H1 (cell line): ENCODE measurements at regions of chr11 and their contacts with region 1.

Region 1: DNA sequence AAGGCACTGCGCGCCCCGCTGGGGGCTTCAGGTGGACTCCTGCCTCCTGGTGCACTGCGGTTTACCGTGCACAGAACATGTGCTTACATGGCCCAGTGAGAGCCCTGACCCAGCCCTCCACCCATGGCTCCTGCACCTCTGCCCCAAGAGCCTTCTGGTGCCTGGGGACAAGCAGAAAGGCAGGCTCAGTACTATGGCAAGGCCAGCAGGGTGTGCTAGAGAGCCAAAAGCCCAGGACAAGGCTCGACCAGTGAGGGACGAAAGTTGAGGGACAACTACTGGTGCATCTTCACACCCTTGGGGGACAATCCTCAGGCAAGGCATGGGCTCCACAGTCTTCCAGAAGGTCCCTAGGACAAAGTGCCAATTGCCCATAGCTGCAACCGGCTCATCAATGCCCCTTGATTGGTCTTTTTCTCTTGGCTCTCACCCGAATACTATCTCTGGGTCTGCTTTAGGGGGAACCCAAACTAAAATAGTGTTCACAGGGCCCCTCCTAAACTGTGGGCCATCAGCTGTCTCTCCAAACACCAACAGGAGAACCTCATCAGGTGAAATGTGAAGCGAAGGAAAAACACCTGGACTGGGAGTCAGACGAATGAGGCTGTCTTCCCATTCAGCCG is 13.5 kb downstream of the PGA5 start:
- DNase-seq: peak; percentile 38 to 89
- H3K4me3 ChIP-seq: no peak overlapping the region
- H3K27ac ChIP-seq: no peak overlapping the region
- H3K4me1 ChIP-seq: no peaks in the 10 kb centered on the region; a peak in 1 of 7 replicates
- H3K27me3 ChIP-seq: no peaks in the 10 kb centered on the region; a peak in 1 of 7 replicates
- CTCF ChIP-seq: peak; percentile 89 to 99 (median 99)
- EP300 ChIP-seq: no peak
- POLR2A ChIP-seq: no peak
- RAD21 ChIP-seq: peak; percentile 66 to 84

Region 2: DNA sequence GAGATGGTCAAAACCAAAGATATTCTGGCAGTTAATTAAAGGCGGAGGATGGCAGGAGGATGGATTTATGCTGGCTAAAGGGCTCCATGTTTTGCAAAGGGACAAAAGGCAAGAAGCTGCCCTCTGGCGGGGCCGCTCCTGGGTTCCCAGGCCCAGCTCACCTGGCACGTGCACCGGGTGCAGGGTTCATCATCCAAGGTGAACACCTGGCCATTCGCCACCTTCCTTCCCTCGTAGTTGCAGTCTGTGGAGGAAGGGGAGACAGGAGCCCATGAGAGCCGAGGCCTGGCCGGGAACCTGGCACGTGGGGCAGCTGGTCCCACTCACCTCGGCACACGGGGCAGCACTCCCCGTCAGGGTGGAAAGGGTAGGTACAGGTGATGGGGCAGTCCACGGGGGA is 10.3 kb after region 1 on chr11:
- CTCF ChIA-PET with region 1: interaction called, 15 read pairs
- POLR2A ChIA-PET with region 1: interaction called, 6 read pairs
- DNase-seq: no peak
- H3K4me3 ChIP-seq: no peak overlapping the region
- H3K27ac ChIP-seq: no peak overlapping the region
- H3K4me1 ChIP-seq: no peaks in the 10 kb centered on the region
- H3K27me3 ChIP-seq: no peaks in the 10 kb centered on the region
- CTCF ChIP-seq: no peak
- EP300 ChIP-seq: no peak
- POLR2A ChIP-seq: no peak
- RAD21 ChIP-seq: no peak

Region 3: DNA sequence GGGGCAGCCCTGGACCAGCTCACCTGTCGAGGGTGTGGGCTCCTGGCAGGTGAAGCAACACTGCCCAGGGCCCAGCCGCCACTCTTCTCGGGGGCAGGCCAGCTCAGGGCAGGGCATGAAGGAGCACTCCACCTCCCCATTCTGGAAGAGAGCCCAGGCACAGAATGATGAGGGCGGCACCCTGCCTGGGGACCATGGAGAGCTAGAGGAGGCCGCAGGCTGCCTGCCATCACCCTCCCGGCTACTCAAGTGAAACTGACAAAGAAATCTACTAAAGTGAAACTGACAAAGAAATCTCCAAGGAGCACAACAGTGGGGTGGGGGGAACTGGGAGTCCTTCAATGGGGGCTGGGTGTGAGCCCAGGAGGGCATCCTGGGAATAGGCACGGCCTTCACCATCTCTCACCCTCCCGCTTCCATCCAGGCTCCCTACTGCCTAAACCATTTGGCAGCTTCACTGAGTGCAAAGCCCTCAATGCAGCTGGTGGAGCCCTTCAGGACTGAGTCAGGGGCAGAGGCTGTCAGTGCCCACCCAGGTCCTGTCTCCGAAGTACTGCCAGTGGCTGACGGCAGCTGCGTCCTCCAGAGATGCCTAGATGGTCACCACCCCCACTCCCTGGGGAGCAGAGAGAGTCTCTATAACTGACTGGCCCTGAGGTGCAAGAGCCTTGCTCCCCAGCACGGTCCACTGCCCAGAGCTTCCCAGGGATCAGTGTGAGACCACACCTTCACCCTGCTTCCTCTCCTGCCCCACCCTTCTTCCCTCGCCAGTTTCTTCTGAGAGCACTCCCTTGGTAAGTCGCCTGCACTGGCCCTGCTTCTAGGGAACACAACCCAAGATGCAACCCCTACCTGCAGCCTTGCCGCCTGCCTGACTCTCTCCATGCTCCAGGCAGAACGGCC is 18.9 kb after region 1 on chr11:
- CTCF ChIA-PET with region 1: interaction called, 32 read pairs
- POLR2A ChIA-PET with region 1: interaction called, 4 read pairs
- DNase-seq: no peak
- H3K4me3 ChIP-seq: no peak overlapping the region
- H3K27ac ChIP-seq: no peak overlapping the region
- H3K4me1 ChIP-seq: no peaks in the 10 kb centered on the region
- H3K27me3 ChIP-seq: no peaks in the 10 kb centered on the region
- CTCF ChIP-seq: no peak
- EP300 ChIP-seq: no peak
- POLR2A ChIP-seq: no peak
- RAD21 ChIP-seq: no peak

Region 4: DNA sequence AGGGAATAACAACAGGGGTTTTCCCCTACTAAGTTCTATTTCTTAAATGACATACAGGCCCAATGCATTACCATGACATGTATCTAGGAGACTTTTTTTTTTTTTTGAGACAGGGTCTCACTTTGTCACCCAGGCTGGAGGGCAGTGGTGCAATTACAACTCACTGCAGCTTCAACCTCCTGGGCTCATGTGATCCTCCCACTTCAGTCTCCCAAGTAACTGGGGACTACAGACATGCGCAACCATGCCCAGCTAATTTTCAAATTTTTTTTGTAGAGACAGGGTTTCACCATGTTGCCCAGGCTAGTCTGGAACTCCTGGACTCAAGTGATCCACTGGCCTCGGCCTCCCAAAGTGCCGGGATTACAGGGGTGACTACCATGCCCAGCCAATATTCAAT is 167.7 kb after region 1 on chr11:
- CTCF ChIA-PET with region 1: no interaction called
- POLR2A ChIA-PET with region 1: no interaction called
- DNase-seq: no peak
- H3K4me3 ChIP-seq: no peak overlapping the region
- H3K27ac ChIP-seq: no peak overlapping the region
- H3K4me1 ChIP-seq: no peaks in the 10 kb centered on the region
- H3K27me3 ChIP-seq: no peaks in the 10 kb centered on the region
- CTCF ChIP-seq: no peak
- EP300 ChIP-seq: no peak
- POLR2A ChIP-seq: no peak
- RAD21 ChIP-seq: no peak